GM10248 (cell line): ENCODE measurements at regions of chr6 and their contacts with region 1.

Region 1: DNA sequence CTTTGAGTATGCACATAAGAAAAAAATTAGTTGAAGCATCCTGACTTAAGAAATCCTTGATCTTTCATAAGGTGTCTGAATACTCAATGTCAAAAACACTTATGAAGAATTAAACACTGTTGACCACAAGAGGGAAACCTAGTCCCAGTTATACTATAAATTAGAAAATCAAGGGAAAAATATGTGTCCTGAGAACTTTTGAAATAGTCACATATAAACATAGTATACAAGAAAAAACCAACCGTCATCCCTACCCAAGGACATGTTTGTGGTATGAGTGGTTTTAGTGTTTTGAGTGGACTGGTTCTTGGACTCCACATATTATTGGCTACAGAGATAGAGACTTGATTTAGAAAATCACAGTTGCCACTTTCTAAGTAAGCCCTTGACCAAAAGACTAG is 7.6 kb upstream of the HLA-DRA start:
- DNase-seq: peak; percentile 29
- CTCF ChIP-seq: peak; percentile 47

Region 2: GRCh38 chr6:31769684-31770371 is 662.2 kb before region 1 on chr6:
- CTCF ChIA-PET with region 1: no interaction called
- POLR2A ChIA-PET with region 1: no interaction called
- DNase-seq: peak; percentile 92
- CTCF ChIP-seq: peak; percentile 69

Region 3: DNA sequence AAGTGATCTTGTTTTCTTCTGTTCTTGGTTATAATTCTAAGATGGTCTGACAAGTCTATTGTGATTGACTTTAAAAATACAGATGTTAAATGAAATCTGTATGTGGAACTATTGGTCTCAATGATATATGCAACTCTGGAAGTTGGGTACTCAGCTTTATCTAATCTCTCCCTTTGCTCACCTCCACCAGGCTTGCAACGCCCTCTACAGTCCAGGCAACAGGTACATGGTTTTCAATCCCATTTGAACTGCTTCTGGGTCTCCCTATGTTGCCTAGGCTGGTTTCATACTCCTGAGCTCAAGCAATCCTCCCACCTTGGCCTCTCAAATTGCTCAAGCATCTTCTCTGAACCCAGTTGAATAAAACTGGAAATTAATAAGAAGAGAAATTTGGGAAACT is 260.0 kb after region 1 on chr6:
- CTCF ChIA-PET with region 1: interaction called, 10 read pairs
- POLR2A ChIA-PET with region 1: no interaction called
- DNase-seq: peak; percentile 28
- CTCF ChIP-seq: peak; percentile 61

Region 4: GRCh38 chr6:32763427-32763826 is 331.4 kb after region 1 on chr6 and contains the start of gene HLA-DQB2:
- CTCF ChIA-PET with region 1: no interaction called
- POLR2A ChIA-PET with region 1: no interaction called
- DNase-seq: no peak
- CTCF ChIP-seq: no peak